Prostate gland (tissue), 2 donors: ENCODE measurements at regions of chr12 and their contacts with region 1.

Region 1: GRCh38 chr12:80412369-80412953 is 31.6 kb upstream of the PTPRQ start:
- DNase-seq: peak; percentile 25
- H3K4me3 ChIP-seq: no peak overlapping the region
- H3K27ac ChIP-seq: no peak overlapping the region
- H3K4me1 ChIP-seq: no peaks in the 10 kb centered on the region
- H3K27me3 ChIP-seq: no peaks in the 10 kb centered on the region
- CTCF ChIP-seq: peak; percentile 42 to 76 (median 73)
- POLR2A ChIP-seq: no peak

Region 2: DNA sequence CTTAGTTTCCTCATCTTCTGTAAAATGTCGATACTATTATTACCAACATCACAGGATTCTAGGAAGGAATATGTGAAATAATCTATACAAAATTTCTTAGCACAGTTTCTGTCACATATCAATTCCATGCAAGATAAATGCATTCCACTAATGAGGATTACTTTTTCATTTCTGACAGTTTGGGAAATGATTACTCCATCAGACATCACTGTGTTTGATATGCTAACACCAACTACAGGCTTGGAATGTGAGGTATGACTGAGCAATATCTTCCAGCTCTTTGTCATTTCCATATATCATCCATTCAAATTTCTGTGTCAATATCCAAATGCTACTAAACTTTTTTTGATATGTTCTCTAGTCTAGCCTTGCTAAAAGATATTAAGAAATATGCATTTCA is 79.6 kb before region 1 on chr12:
- intact Hi-C with region 1: no loop called
- DNase-seq: no peak
- H3K4me3 ChIP-seq: no peak overlapping the region
- H3K27ac ChIP-seq: no peak overlapping the region
- H3K4me1 ChIP-seq: no peaks in the 10 kb centered on the region
- H3K27me3 ChIP-seq: no peaks in the 10 kb centered on the region
- CTCF ChIP-seq: no peak
- POLR2A ChIP-seq: no peak

Region 3: DNA sequence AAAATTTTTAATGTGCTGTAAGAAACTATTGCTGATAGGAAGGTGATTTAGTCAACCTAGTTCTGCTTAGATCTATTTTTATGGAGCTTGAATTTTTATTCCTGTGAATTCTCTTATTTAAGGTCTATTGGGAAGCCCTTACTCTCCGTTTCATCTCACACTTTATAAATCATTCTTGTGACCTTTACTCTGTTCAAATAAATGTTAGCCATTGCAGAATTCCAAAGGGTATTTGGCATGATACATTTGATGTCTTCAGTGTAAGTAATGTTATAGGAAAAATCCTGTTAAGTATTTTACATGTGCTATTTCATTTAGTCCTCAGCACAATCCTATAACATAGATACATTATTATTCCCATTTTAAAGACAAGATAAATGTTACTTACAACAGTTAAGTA is 44.1 kb after region 1 on chr12:
- intact Hi-C with region 1: no loop called
- DNase-seq: no peak
- H3K4me3 ChIP-seq: no peak overlapping the region
- H3K27ac ChIP-seq: no peak overlapping the region
- H3K4me1 ChIP-seq: no peaks in the 10 kb centered on the region
- H3K27me3 ChIP-seq: peaks cover 2% of the 10 kb centered on the region
- CTCF ChIP-seq: no peak
- POLR2A ChIP-seq: no peak

Region 4: DNA sequence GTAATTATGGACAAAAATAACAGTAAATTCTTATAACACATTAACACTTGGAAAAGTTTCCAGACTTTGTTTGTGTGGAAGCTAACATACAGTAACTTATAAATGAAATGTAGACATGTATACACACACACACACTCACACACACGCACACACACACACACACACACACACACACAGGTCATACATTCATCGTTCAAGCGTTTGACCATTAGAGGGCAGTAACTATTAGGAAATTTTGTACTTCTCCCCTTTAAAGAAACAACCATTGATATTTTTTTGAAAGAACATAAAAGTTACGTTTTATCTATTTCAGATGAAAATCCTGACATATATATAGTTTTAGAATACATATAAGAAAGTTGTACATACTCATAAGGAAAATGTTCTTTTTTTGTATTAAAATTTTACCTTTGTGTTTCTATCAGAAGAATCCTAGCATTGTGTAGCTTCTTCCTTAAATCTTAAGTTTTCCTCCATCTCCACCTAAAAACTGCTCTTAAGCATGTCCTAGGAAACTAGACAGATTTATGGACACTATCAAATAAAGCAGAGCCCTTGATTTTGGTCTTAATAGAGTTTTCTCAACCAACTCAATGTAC is 60.5 kb after region 1 on chr12:
- intact Hi-C with region 1: loop called (anchors 5 kb)
- DNase-seq: no peak
- H3K4me3 ChIP-seq: no peak overlapping the region
- H3K27ac ChIP-seq: no peak overlapping the region
- H3K4me1 ChIP-seq: no peaks in the 10 kb centered on the region
- H3K27me3 ChIP-seq: no peaks in the 10 kb centered on the region
- CTCF ChIP-seq: peak in 3 of 4 experiments; percentile 35 to 47 (median 41)
- POLR2A ChIP-seq: no peak

Region 5: DNA sequence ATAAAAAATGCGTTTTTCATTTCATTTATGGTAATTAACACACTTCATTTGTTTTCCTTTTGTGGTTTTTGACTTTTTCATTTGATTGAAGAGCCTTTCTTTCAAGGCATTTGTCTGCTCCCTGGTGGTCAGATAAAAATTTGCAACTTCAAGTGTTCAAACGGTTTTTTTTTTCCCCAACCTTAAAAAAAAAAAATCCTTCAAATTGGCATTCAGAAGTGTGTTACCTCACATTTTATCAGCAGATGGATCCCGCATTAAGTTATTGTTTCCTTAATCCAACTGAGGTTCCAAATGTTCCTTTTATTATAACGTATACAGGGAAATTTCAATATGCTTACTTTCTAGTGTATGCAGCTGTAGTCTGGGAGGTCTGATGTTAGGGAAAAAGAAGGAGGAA is 351.4 kb after region 1 on chr12:
- intact Hi-C with region 1: loop called (anchors 2 kb)
- DNase-seq: no peak
- H3K4me3 ChIP-seq: no peak overlapping the region
- H3K27ac ChIP-seq: no peak overlapping the region
- H3K4me1 ChIP-seq: no peaks in the 10 kb centered on the region
- H3K27me3 ChIP-seq: no peaks in the 10 kb centered on the region
- CTCF ChIP-seq: peak; percentile 15 to 60 (median 54)
- POLR2A ChIP-seq: no peak